PC-9 (cell line): ENCODE measurements at regions of chr2 and their contacts with region 1.

Region 1: DNA sequence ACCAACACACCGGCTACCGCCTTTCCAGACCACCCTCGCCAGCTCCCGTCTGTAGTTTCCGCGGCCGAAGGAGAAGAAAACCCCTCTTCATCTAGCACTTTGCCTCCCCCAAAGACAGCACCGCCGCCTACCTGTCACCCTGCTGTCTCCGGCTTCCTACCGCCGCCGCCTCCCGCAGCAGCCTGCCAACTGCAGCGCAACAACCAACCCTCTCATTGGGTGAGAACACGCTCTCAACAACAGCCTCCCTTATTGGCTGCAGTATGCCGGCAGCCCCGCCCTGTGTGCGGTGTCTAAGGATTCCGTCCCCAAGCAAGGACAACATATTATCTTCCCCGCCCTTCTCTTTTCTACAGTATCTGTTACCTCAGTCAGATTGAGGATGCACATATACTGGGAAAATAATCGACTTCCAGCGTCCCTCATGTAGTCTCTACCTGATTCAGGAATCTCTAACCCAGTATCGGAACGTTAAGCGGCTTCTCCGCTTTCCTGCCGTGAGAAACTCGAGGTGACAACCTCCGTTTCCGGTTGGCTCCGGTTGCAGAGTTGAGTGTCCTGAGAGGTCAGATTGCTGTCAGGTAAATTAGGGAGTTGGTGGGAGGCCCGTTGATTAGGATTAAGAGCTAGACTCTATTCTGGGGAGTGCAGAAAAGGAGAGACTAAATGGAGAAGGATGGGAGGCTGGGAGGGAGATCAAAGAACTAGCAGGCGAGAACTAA is at the starts of genes HYCC2 and NDUFB3:
- DNase-seq: peak; percentile 84 to 92
- H3K4me3 ChIP-seq: peak within 1 kb of the TSS; percentile 66
- H3K27ac ChIP-seq: peak within 1 kb of the TSS; percentile 72
- H3K4me1 ChIP-seq: peaks cover 18% of the 10 kb centered on the region
- H3K27me3 ChIP-seq: no peaks in the 10 kb centered on the region
- CTCF ChIP-seq: peak; percentile 37; the same call in 1 of the 2 replicates
- total RNA-seq, gene HYCC2: 8.8 and 10.7 TPM in 2 replicates
- total RNA-seq, gene NDUFB3: 93.1 and 96.7 TPM in 2 replicates

Region 2: DNA sequence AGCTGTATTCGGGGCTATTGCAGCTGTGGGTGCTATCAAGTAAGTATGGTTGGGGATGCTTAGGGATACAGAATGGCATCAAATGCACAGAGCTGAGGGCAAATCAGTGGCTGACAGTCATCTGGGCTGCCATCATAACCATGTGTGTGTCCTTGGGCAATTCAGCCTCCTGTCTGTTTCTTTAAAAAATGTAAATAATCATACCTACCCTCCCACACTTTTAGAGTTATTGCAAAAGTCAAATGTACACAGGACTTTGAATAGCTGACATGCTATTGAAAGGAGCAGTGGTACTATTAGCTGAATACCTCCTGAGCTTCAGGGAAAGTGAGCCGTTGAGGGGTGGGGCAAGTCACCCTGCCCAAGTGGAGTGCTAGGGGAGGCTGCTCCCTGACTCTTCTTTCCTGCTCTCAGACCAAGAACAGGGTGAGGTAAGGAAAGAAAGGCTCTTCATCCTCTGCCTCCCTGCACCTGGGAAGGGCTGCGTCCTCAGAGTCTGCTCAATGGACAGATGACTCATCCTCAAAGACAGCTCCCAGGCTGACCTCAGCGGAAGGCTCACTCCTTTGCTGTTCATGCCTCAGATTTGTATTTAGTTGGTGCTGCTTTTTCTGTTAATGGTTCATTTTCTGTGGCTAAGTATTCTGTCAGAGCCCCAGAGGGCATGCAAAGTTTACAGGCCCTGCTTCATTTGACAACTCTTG is 314.9 kb before region 1 on chr2:
- CTCF ChIA-PET with region 1: no interaction called
- POLR2A ChIA-PET with region 1: no interaction called
- intact Hi-C with region 1: no loop called
- DNase-seq: peak; percentile 64 to 89
- H3K4me3 ChIP-seq: peak overlapping the region; percentile 2; the same call in 1 of the 2 replicates
- H3K27ac ChIP-seq: peak overlapping the region; percentile 83
- H3K4me1 ChIP-seq: peaks cover 67% of the 10 kb centered on the region
- H3K27me3 ChIP-seq: no peaks in the 10 kb centered on the region
- CTCF ChIP-seq: no peak

Region 3: DNA sequence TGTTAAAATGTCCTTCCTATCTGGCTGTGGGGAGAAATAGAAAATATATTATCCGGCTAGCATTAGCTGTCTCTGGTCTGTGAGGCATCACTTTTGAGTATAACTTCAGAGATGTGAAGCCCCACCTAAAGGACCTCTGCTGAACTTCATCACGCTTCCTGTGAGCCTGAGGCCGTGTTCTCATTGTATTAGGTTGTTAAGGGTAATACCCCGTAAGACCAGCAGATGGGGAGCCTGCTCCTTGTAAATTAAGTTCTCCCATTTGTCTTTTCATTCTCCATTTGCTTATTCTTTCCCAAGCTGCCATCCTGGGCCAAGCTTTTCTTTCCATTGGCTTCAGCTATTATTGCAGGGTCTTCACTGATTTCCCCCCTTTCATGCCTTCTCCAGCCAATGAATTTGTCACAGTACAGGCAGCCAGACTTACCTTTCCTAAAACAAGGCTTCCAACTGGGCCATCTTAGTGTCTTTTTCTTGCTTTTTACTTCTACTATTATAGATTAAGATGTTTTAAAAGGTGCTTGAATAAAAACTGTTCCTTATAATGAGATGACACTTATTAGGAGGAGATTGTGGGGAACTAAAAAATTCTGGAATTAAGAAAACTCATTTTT is 170.1 kb before region 1 on chr2:
- CTCF ChIA-PET with region 1: interaction called, 9 read pairs
- POLR2A ChIA-PET with region 1: interaction called, 3 read pairs
- intact Hi-C with region 1: loop called (anchors 1 kb)
- DNase-seq: peak; percentile 68 to 75
- H3K4me3 ChIP-seq: no peak overlapping the region
- H3K27ac ChIP-seq: no peak overlapping the region
- H3K4me1 ChIP-seq: no peaks in the 10 kb centered on the region
- H3K27me3 ChIP-seq: no peaks in the 10 kb centered on the region
- CTCF ChIP-seq: peak; percentile 81

Region 4: GRCh38 chr2:200944467-200945394 is 126.9 kb before region 1 on chr2:
- CTCF ChIA-PET with region 1: interaction called, 3 read pairs
- POLR2A ChIA-PET with region 1: interaction called, 13 read pairs
- intact Hi-C with region 1: no loop called
- DNase-seq: peak; percentile 62 to 92
- H3K4me3 ChIP-seq: no peak overlapping the region
- H3K27ac ChIP-seq: peak overlapping the region; percentile 95
- H3K4me1 ChIP-seq: peaks cover 33% of the 10 kb centered on the region
- H3K27me3 ChIP-seq: no peaks in the 10 kb centered on the region
- CTCF ChIP-seq: no peak

Region 5: DNA sequence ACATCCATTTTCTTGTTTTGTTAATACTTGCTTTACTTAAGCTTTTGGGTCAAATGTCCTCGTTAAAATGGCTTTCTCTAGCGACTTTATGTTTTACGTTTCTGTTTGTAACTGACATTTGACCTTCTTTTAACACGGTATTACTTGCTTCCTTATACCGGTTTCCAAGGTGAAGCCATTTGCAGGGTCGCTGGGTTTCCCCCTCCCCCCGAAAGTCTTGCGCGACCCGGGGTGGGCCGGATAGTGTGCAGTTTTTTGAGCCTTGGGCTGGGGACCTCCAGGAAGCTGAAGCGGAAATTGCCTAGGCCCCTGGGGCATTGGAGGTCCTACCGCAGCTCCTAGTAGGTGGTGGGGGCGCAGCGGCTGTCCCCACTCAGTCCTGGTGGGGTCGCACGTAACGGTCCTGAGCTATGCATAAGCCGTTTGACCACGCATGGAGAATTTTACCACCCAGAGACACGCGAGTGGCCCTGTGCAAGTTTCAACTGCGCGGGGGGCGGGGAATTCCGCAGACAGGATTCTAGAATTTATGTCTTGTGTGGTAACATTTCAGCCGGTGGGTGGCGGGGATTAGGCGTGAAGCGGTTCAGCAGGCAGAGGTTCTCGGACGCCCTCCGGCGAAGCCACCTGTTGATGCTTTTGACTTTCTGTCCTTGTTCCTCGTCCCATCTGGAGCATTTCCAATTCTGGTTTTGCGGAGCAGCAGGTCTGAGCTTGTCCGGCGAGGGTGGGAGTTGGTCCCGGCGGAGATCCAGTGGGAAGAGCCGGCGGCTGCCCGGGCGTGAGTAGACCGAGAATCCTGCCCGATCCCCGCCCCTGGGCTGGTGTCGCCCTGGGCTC is 46.7 kb after region 1 on chr2:
- CTCF ChIA-PET with region 1: no interaction called
- POLR2A ChIA-PET with region 1: no interaction called
- intact Hi-C with region 1: loop called (anchors 5 kb)
- DNase-seq: peak; percentile 77 to 87
- H3K4me3 ChIP-seq: peak overlapping the region; percentile 68
- H3K27ac ChIP-seq: peak overlapping the region; percentile 100
- H3K4me1 ChIP-seq: peaks cover 59% of the 10 kb centered on the region
- H3K27me3 ChIP-seq: no peaks in the 10 kb centered on the region
- CTCF ChIP-seq: peak; percentile 56; the same call in 1 of the 2 replicates

Region 6: GRCh38 chr2:201158111-201158929 is 86.7 kb after region 1 on chr2:
- CTCF ChIA-PET with region 1: no interaction called
- POLR2A ChIA-PET with region 1: no interaction called
- intact Hi-C with region 1: loop called (anchors 1 kb)
- DNase-seq: peak; percentile 57 to 63
- H3K4me3 ChIP-seq: no peak overlapping the region
- H3K27ac ChIP-seq: no peak overlapping the region
- H3K4me1 ChIP-seq: no peaks in the 10 kb centered on the region
- H3K27me3 ChIP-seq: no peaks in the 10 kb centered on the region
- CTCF ChIP-seq: peak; percentile 76

Region 7: GRCh38 chr2:201220102-201220570 is 148.5 kb after region 1 on chr2:
- CTCF ChIA-PET with region 1: no interaction called
- POLR2A ChIA-PET with region 1: no interaction called
- intact Hi-C with region 1: no loop called
- DNase-seq: peak; percentile 53 to 68
- H3K4me3 ChIP-seq: no peak overlapping the region
- H3K27ac ChIP-seq: peak overlapping the region; percentile 49
- H3K4me1 ChIP-seq: peaks cover 24% of the 10 kb centered on the region
- H3K27me3 ChIP-seq: no peaks in the 10 kb centered on the region
- CTCF ChIP-seq: no peak

Region 8: GRCh38 chr2:201754717-201755415 is 683.2 kb after region 1 on chr2:
- CTCF ChIA-PET with region 1: no interaction called
- POLR2A ChIA-PET with region 1: interaction called, 12 read pairs
- intact Hi-C with region 1: no loop called
- DNase-seq: no peak
- H3K4me3 ChIP-seq: no peak overlapping the region
- H3K27ac ChIP-seq: no peak overlapping the region
- H3K4me1 ChIP-seq: no peaks in the 10 kb centered on the region
- H3K27me3 ChIP-seq: no peaks in the 10 kb centered on the region
- CTCF ChIP-seq: no peak